ENCODE measurements at regions of chr6 and their contacts with region 1.

Region 1: DNA sequence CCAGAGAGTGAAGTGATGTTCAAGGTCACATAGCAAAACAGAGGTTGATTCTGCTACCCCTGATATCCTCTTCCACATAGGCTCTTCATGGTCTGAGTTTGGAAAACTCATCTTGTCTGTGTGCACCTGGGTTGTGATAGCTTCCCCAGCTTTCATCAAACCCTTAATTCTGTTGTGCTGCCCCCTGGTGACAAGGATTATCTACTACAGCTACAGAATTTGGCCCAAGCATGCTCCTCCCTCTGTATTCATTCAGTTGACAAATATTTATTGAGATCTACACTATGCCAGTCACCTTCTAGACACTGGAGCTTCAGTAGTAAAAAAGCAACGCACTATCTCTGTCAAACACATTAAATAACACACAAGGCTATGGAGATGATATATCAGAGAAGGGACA is 50.4 kb downstream of the SMPDL3A start:
- DNase-seq: peak; percentile 59
- H3K4me3 ChIP-seq: no peak overlapping the region
- H3K27ac ChIP-seq: no peak overlapping the region
- H3K4me1 ChIP-seq: no peaks in the 10 kb centered on the region
- H3K27me3 ChIP-seq: no peaks in the 10 kb centered on the region
- CTCF ChIP-seq: peak; percentile 49 to 56
- POLR2A ChIP-seq: no peak

Region 2: GRCh38 chr6:122258839-122259238 is 580.6 kb before region 1 on chr6:
- CTCF ChIA-PET with region 1: no interaction called
- POLR2A ChIA-PET with region 1: no interaction called
- dilution Hi-C with region 1: no loop called
- intact Hi-C with region 1: no loop called
- DNase-seq: no peak
- H3K4me3 ChIP-seq: no peak overlapping the region
- H3K27ac ChIP-seq: no peak overlapping the region
- H3K4me1 ChIP-seq: no peaks in the 10 kb centered on the region
- H3K27me3 ChIP-seq: no peaks in the 10 kb centered on the region
- CTCF ChIP-seq: no peak
- POLR2A ChIP-seq: no peak

Region 3: DNA sequence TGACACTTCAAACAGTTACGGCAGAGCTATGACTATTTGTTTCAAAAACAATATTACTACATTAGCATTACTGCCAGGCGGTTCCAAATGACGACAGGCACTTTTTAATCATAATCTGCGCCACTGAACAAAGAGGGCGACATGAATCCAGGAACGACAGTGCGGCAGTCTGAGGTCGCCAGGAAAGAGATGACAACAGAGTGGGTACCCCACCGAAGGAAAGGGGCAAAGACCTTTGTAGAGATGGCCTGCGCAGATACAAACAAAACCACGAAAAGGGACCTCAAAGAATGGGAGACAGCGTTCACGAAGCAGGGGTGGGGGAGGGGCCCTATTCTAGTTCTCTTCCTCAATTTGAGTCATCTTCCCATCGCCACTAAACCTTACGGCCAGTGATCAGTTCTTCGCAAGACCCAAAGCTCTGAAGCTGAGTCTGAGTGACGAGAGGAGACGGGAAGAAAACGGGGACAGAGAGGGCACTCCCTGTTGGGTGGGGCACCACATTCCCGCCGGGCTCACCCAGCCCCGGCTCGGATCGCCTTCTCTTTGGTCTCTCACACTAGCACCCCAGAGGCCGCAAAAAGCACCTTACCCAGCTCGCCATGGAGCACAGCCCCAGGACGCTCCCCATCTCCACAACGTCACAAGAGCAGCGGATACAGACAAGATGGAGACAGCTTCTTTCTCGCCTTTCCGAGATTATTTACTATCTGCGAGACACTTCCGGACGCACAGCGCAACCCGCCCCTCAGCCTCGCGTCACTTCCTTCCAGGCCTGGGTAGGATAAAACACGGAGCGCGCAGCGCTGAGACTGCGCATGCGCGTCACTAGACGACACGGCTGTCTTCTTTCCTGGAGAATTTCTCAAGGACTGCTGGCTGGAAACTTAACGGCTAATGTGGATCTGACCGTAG is 368.1 kb before region 1 on chr6 and contains the start of gene SERINC1:
- CTCF ChIA-PET with region 1: no interaction called
- POLR2A ChIA-PET with region 1: no interaction called
- dilution Hi-C with region 1: no loop called
- intact Hi-C with region 1: loop called (anchors 1 kb)
- DNase-seq: peak; percentile 97
- H3K4me3 ChIP-seq: peak within 1 kb of the TSS; percentile 83 to 98 (median 97)
- H3K27ac ChIP-seq: peak within 1 kb of the TSS; percentile 91
- H3K4me1 ChIP-seq: peaks cover 8% of the 10 kb centered on the region
- H3K27me3 ChIP-seq: no peaks in the 10 kb centered on the region
- CTCF ChIP-seq: no peak
- POLR2A ChIP-seq: peak; percentile 82
- total RNA-seq, gene SERINC1: 76.5 and 82.0 TPM in 2 replicates

Region 4: GRCh38 chr6:122491919-122492555 is 347.4 kb before region 1 on chr6:
- CTCF ChIA-PET with region 1: interaction called, 81 read pairs
- POLR2A ChIA-PET with region 1: no interaction called
- dilution Hi-C with region 1: no loop called
- intact Hi-C with region 1: loop called (anchors 1 kb)
- DNase-seq: peak; percentile 78
- H3K4me3 ChIP-seq: no peak overlapping the region
- H3K27ac ChIP-seq: no peak overlapping the region
- H3K4me1 ChIP-seq: no peaks in the 10 kb centered on the region
- H3K27me3 ChIP-seq: peaks cover 2 to 12% of the 10 kb centered on the region in 2 experiments
- CTCF ChIP-seq: peak; percentile 76 to 82
- POLR2A ChIP-seq: no peak

Region 5: GRCh38 chr6:122609856-122610689 is 229.4 kb before region 1 on chr6 and contains the start of gene PKIB:
- CTCF ChIA-PET with region 1: interaction called, 13 read pairs
- POLR2A ChIA-PET with region 1: no interaction called
- dilution Hi-C with region 1: no loop called
- intact Hi-C with region 1: no loop called
- DNase-seq: peak; percentile 71
- H3K4me3 ChIP-seq: peak within 1 kb of the TSS; percentile 34 to 74 (median 38)
- H3K27ac ChIP-seq: no peak within 1 kb of the TSS
- H3K4me1 ChIP-seq: peaks cover 9% of the 10 kb centered on the region
- H3K27me3 ChIP-seq: peaks cover 7 to 21% of the 10 kb centered on the region in 2 experiments
- CTCF ChIP-seq: peak; percentile 13 to 59
- POLR2A ChIP-seq: no peak
- total RNA-seq, gene PKIB: not detected in 2 replicates

Region 6: GRCh38 chr6:122749451-122750050 is 89.9 kb before region 1 on chr6:
- CTCF ChIA-PET with region 1: interaction called, 91 read pairs
- POLR2A ChIA-PET with region 1: no interaction called
- dilution Hi-C with region 1: no loop called
- intact Hi-C with region 1: loop called (anchors 1 kb)
- DNase-seq: no peak
- H3K4me3 ChIP-seq: no peak overlapping the region
- H3K27ac ChIP-seq: no peak overlapping the region
- H3K4me1 ChIP-seq: no peaks in the 10 kb centered on the region
- H3K27me3 ChIP-seq: peaks cover 0 to 3% of the 10 kb centered on the region in 2 experiments
- CTCF ChIP-seq: no peak
- POLR2A ChIP-seq: no peak

Region 7: DNA sequence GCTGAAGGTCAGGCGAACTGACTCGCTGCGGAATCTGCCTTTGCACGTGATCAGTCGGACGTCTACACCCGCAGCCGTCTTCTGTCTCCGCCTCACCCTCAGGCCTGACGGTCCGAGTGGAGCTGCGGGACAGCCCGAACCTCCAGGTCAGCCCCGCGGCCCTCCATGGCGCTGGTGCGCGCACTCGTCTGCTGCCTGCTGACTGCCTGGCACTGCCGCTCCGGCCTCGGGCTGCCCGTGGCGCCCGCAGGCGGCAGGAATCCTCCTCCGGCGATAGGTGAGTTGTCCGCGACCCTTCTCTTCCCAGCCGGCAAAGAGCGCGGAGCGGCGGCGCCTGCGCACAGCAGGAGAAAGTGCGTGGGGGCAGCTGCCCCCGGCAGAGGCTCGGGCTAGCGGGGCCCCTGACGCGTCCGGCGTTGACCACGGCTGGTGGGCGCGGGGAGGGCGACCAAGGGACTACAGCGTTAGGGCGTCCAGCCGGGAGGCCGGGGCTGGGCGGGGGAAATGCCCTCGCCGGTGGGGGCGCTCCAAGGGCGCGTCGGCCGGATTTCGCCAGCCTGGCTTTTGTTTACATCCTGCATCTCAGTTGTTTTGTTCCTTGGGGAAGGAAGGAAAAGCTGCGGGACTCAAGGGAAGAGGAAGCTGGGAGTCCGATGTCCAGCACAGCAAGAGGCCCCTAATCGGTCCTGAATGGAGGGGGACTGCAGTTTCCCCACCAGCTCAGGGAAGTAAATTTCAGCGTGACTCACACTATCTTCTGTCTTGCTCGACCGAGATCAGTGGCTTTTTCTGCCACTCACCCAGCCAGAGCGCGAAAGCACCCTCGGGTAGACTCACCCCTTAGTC is 50.1 kb before region 1 on chr6 and contains the start of gene SMPDL3A:
- CTCF ChIA-PET with region 1: interaction called, 16 read pairs
- POLR2A ChIA-PET with region 1: no interaction called
- dilution Hi-C with region 1: no loop called
- intact Hi-C with region 1: loop called (anchors 2 kb)
- DNase-seq: peak; percentile 77
- H3K4me3 ChIP-seq: peak within 1 kb of the TSS; percentile 53 to 91 (median 58)
- H3K27ac ChIP-seq: peak within 1 kb of the TSS; percentile 31
- H3K4me1 ChIP-seq: peaks cover 6% of the 10 kb centered on the region
- H3K27me3 ChIP-seq: peaks cover 9 to 21% of the 10 kb centered on the region in 2 experiments
- CTCF ChIP-seq: peak; percentile 35 to 55
- POLR2A ChIP-seq: peak; percentile 9
- total RNA-seq, gene SMPDL3A: 4.1 TPM in 2 replicates

Region 8: DNA sequence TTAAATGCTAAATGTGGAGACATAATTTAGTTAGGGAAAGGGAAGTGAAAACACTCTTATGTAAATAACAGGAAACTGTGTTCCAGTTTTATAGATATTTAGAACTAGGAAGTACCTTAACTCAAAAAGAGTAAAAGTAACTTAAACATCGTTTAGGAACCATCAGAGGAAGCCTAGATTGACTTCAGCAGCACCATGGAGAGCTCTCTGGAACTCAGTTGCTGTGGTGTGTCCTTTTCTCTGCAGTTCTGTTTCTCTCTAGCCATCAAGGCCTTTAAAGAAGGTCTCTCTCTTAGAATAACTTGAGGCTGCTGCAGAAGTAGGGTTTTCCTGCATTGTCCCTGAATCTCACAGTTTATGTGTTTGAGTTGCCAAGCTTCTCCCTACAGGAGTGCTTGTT is 183.5 kb after region 1 on chr6:
- CTCF ChIA-PET with region 1: no interaction called
- POLR2A ChIA-PET with region 1: no interaction called
- dilution Hi-C with region 1: no loop called
- intact Hi-C with region 1: no loop called
- DNase-seq: no peak
- H3K4me3 ChIP-seq: no peak overlapping the region
- H3K27ac ChIP-seq: no peak overlapping the region
- H3K4me1 ChIP-seq: no peaks in the 10 kb centered on the region
- H3K27me3 ChIP-seq: no peaks in the 10 kb centered on the region
- CTCF ChIP-seq: no peak
- POLR2A ChIP-seq: no peak